ENCODE measurements at regions of chr5 and their contacts with region 1.

Region 1: DNA sequence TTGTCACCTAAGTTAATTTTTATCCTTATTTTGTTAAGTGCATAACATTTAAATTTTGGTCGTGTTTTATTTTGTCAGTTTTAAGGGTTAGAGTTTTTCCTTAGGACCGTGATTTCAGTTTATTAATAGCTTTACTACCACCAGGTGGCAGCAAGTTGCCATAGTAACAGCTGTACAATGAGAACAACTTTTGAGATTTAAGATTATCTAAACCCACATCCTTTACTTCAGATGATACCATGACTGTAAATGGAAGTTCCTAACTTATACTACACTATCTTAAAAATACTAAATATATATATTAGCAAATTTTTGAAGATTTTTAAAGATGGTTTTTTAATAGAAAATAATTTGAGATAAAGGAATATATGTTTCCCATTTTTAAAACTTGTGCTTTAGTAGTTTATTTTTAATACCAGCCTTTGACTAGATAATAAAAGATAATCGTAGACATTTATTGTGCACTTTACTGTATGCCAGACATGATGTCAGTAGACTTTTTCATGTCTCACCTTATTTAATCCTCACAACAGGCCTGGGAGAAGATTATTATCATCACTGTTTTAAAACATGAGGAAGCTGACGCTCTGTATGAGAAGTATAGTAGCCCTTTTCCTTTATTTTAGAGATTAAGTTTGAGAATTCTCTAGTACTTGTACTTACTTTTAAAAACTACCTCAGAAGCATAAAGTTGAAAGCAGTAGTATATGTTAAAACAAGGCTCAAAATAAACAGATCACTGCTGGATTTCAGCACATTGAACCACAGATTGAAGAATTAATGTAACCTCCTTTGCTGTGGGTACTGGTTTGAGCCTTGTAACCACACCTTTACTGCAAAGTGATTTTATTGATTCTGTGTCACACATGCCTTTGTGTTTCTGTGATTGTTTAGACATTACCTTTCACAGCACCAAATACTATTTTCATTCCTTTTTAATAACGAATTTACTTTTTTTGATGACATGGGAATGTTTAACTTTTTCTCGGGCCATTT is 27.5 kb downstream of the SREK1 start:
- DNase-seq: peak in 1 of 3 donors; percentile 49
- ATAC-seq: peak; percentile 50 to 56
- H3K4me3 ChIP-seq: no peak overlapping the region
- H3K27ac ChIP-seq: no peak overlapping the region
- H3K4me1 ChIP-seq: no peaks in the 10 kb centered on the region
- H3K27me3 ChIP-seq: no peaks in the 10 kb centered on the region

Region 2: GRCh38 chr5:66089384-66089783 is 82.3 kb before region 1 on chr5:
- intact Hi-C with region 1: no loop called
- DNase-seq: no peak
- ATAC-seq: no peak
- H3K4me3 ChIP-seq: no peak overlapping the region
- H3K27ac ChIP-seq: no peak overlapping the region
- H3K4me1 ChIP-seq: no peaks in the 10 kb centered on the region
- H3K27me3 ChIP-seq: no peaks in the 10 kb centered on the region

Region 3: GRCh38 chr5:66769839-66770617 is 598.4 kb after region 1 on chr5:
- intact Hi-C with region 1: loop called in 1 of 4 experiments (anchors 10 kb)
- DNase-seq: peak in 1 of 3 donors; percentile 55
- ATAC-seq: peak; percentile 57 to 71
- H3K4me3 ChIP-seq: no peak overlapping the region
- H3K27ac ChIP-seq: no peak overlapping the region
- H3K4me1 ChIP-seq: no peaks in the 10 kb centered on the region
- H3K27me3 ChIP-seq: no peaks in the 10 kb centered on the region